Naive thymus-derived CD4-positive, alpha-beta T cell (primary cell): ENCODE measurements at regions of chr9 and their contacts with region 1.

Region 1: DNA sequence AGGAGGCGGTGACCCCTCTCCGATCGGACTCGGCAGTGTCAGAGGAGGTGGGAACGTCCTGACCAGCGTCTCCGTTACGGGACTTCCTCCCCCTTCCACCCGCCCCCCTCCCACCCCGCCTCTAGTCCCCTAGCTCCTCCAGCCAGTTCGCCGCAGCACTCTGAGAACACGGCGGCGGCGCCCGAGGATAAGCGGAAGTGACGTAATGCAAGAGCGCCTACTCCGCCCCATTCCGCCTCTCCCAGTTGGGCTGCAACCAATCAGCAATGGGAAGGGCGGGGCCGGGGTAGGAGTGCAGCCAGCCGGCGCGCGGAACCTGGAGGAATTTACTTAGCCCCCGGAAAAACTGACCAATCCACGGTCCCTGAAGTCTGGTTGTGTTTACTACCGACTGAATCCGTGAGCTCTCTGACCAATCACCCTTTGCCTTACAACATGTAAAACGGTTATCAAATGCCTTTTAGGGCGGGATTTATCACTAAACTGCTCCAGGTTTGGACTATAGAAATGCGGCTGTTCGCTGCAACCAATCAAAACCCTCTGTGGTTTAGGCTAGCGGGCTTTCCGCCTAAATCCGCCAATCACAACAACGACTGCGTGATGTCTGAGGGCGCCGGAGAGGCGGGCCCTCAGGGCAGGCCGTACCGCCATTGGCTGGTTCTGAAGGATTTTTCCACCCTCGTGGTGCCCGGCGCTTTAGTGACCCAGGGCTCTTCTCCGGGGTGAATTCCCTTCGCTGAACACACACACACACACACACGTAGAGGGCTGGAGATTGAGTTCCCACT is at the start of gene ZBTB5:
- DNase-seq: peak; percentile 93 to 99 (median 99)
- ATAC-seq: peak; percentile 87
- H3K4me3 ChIP-seq: peak within 1 kb of the TSS; percentile 76
- H3K4me3 Mint-ChIP-seq: peak within 1 kb of the TSS; percentile 87 to 99 (median 96)
- H3K27ac ChIP-seq: peak within 1 kb of the TSS; percentile 89
- H3K27ac Mint-ChIP-seq: peak within 1 kb of the TSS; percentile 88 to 98 (median 95)
- H3K4me1 ChIP-seq: peaks cover 12 to 24% of the 10 kb centered on the region in 2 donors
- H3K4me1 Mint-ChIP-seq: peaks cover 27 to 43% (median 35%) of the 10 kb centered on the region in 7 donors
- H3K27me3 ChIP-seq: no peaks in the 10 kb centered on the region
- H3K27me3 Mint-ChIP-seq: no peaks in the 10 kb centered on the region
- total RNA-seq, gene ZBTB5: 8.5 to 16.8 (median 14.8) TPM

Region 2: DNA sequence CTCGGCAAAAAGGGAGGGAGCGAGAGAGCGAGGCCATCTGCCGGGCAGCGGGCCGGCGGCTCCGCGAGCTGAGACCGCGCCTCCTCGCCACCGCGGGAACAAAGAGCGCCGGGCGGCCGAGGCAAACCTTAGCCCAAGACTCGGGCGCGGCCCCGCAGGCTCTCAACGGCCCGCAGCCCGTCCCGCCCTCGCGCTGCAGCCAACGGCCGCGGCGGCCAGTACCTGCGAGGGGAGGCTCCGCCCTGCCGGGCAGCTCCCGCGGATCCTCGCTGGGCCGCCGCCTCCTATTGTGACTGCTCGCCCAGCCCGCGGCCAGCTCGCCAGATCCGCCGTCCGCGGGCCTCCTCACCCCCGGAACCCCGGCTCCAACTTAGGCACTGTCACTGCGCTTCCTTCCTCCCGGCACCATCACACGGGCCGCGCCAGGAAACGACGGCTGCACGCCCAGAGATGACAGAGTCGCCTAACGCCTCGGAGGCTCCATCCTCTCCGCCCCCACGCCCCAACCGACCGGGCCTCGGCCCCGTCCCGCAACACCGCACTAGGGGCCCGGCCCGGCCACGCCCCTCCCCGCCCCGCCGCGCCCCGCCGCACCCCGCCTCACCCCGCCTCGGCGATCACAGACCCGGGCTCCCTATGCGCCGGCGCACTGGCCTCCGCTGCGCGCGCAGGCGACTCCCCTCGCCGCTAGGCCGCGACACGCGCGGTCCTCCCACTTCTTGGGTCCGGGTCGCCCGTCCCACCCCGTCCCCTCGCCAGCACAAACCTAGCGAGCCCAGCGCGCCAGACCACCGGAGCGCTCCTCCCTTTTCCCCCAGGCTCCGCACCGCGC is 1064.9 kb before region 1 on chr9:
- CTCF ChIA-PET with region 1: no interaction called
- POLR2A ChIA-PET with region 1: no interaction called
- intact Hi-C with region 1: loop called (anchors 1 to 2 kb)
- DNase-seq: peak; percentile 83 to 94 (median 91)
- ATAC-seq: peak; percentile 88
- H3K4me3 ChIP-seq: peak overlapping the region; percentile 77
- H3K4me3 Mint-ChIP-seq: peak overlapping the region; percentile 85 to 97 (median 92)
- H3K27ac ChIP-seq: peak overlapping the region; percentile 94
- H3K27ac Mint-ChIP-seq: peak overlapping the region; percentile 92 to 98 (median 95)
- H3K4me1 ChIP-seq: peaks cover 16 to 26% of the 10 kb centered on the region in 2 donors
- H3K4me1 Mint-ChIP-seq: peaks cover 32 to 60% (median 54%) of the 10 kb centered on the region in 7 donors
- H3K27me3 ChIP-seq: no peaks in the 10 kb centered on the region
- H3K27me3 Mint-ChIP-seq: peaks cover 0 to 2% (median 0%) of the 10 kb centered on the region in 5 donors

Region 3: DNA sequence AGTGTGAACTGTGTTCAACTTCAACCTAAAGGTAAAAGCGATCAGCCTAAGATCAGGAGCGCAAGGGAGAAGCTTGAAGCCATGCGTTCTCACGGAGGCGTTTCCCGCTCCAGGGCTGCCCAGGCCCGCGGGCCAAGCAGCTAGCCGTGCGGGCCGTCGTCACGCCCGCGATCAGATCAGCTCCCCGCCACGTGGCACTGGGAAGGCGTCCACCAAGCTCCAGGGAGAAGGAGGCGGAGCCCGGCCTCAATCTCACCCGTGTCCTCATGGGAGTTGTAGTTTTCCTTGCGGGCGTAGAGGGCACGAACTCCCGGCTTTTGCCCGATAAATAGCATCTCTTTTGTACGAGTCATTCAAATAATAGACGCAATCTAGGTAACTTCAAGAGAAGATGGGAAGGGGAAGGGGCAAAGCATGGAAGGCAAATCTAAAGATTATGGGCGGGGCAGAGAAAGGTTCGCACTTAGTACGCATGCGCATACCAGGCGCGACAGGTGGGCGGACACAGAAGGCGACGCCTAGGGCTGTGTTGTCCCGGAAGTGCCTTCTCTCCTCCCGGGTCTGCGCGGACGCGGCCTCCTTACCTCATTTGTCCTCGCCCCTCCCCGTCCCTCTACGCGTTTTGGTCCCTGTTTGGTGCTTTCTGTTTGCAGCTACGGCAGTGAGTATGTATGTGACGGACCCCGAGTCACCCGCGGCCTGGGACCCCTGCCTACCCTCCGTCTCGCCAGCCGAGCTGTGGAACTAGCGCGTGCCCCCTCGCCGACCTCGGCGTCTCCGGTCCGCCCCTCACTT is 385.9 kb before region 1 on chr9:
- CTCF ChIA-PET with region 1: no interaction called
- POLR2A ChIA-PET with region 1: no interaction called
- intact Hi-C with region 1: loop called (anchors 1 to 10 kb)
- DNase-seq: peak; percentile 72 to 96 (median 94)
- ATAC-seq: peak; percentile 98
- H3K4me3 ChIP-seq: peak overlapping the region; percentile 67
- H3K4me3 Mint-ChIP-seq: peak overlapping the region; percentile 89 to 98 (median 95)
- H3K27ac ChIP-seq: peak overlapping the region; percentile 99
- H3K27ac Mint-ChIP-seq: peak overlapping the region; percentile 76 to 99 (median 97)
- H3K4me1 ChIP-seq: peaks cover 14 to 15% of the 10 kb centered on the region in 2 donors
- H3K4me1 Mint-ChIP-seq: peaks cover 33 to 56% (median 41%) of the 10 kb centered on the region in 7 donors
- H3K27me3 ChIP-seq: no peaks in the 10 kb centered on the region
- H3K27me3 Mint-ChIP-seq: peaks cover 0 to 10% (median 3%) of the 10 kb centered on the region in 5 donors

Region 4: DNA sequence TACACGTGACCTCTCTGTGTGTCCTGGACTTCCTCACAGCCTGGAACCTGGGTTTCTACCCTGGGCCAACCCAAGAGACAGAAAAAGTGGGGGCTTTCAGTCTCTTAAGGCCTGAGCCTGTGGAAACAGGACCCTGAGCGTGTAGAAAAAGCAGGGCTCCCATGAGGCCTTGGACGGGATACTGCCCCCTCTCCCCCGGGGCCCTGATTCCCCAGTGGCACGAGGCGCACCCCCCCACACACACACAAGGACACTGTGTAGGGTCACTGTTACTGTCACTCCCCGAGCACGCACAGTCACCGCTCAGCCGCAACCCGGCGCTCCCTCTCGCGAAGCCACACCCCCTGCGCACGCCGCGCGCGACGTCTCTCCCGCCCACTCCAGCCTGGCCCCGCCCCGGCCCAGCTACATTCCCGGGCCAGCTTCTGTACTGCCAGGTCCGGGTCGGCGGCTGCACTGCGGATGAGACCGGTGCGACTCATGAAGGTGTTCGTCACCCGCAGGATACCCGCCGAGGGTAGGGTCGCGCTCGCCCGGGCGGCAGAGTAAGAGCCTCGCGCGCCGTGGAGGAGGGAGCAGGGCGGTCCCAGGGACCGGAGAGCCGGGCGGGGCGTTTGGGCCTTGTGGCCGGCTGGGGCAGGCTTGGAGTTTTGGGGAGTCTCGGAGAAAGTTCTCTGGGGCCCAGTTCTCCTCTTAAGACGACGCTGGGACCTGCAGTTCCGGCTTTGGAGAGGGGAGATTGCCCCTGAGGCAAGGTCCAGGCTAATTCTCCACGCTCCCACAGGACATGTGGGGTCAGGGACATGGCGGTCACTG is 42.9 kb before region 1 on chr9 and contains the start of gene GRHPR:
- CTCF ChIA-PET with region 1: no interaction called
- POLR2A ChIA-PET with region 1: interaction called, 15 read pairs
- intact Hi-C with region 1: loop called (anchors 1 kb)
- DNase-seq: peak; percentile 76 to 93 (median 84)
- ATAC-seq: peak; percentile 99
- H3K4me3 ChIP-seq: peak within 1 kb of the TSS; percentile 86
- H3K4me3 Mint-ChIP-seq: peak within 1 kb of the TSS; percentile 84 to 98 (median 96)
- H3K27ac ChIP-seq: peak within 1 kb of the TSS; percentile 89
- H3K27ac Mint-ChIP-seq: peak within 1 kb of the TSS; percentile 87 to 98 (median 95)
- H3K4me1 ChIP-seq: peaks cover 5 to 12% of the 10 kb centered on the region in 2 donors
- H3K4me1 Mint-ChIP-seq: peaks cover 19 to 31% (median 23%) of the 10 kb centered on the region in 7 donors
- H3K27me3 ChIP-seq: no peaks in the 10 kb centered on the region
- H3K27me3 Mint-ChIP-seq: no peaks in the 10 kb centered on the region
- total RNA-seq, gene GRHPR: 33.2 to 58.6 (median 53.1) TPM

Region 5: GRCh38 chr9:37550781-37551180 is 85.3 kb after region 1 on chr9:
- CTCF ChIA-PET with region 1: no interaction called
- POLR2A ChIA-PET with region 1: no interaction called
- intact Hi-C with region 1: no loop called
- DNase-seq: no peak
- ATAC-seq: no peak
- H3K4me3 ChIP-seq: no peak overlapping the region
- H3K4me3 Mint-ChIP-seq: no peak overlapping the region
- H3K27ac ChIP-seq: no peak overlapping the region
- H3K27ac Mint-ChIP-seq: peak overlapping the region in 1 of 9 donors; percentile 46
- H3K4me1 ChIP-seq: no peaks in the 10 kb centered on the region
- H3K4me1 Mint-ChIP-seq: no peaks in the 10 kb centered on the region
- H3K27me3 ChIP-seq: no peaks in the 10 kb centered on the region
- H3K27me3 Mint-ChIP-seq: no peaks in the 10 kb centered on the region

Region 6: GRCh38 chr9:37753489-37754190 is 288.2 kb after region 1 on chr9 and contains the start of gene TRMT10B:
- CTCF ChIA-PET with region 1: no interaction called
- POLR2A ChIA-PET with region 1: no interaction called
- intact Hi-C with region 1: loop called in 1 of 2 experiments (anchors 1 kb)
- DNase-seq: peak; percentile 50 to 78 (median 70)
- ATAC-seq: peak; percentile 95
- H3K4me3 ChIP-seq: peak within 1 kb of the TSS; percentile 92
- H3K4me3 Mint-ChIP-seq: peak within 1 kb of the TSS; percentile 87 to 98 (median 96)
- H3K27ac ChIP-seq: peak within 1 kb of the TSS; percentile 87
- H3K27ac Mint-ChIP-seq: peak within 1 kb of the TSS; percentile 68 to 95 (median 92)
- H3K4me1 ChIP-seq: peaks cover 9 to 11% of the 10 kb centered on the region in 2 donors
- H3K4me1 Mint-ChIP-seq: peaks cover 26 to 52% (median 33%) of the 10 kb centered on the region in 7 donors
- H3K27me3 ChIP-seq: no peaks in the 10 kb centered on the region
- H3K27me3 Mint-ChIP-seq: no peaks in the 10 kb centered on the region
- total RNA-seq, gene TRMT10B: 16.0 to 28.9 (median 18.5) TPM

Region 7: DNA sequence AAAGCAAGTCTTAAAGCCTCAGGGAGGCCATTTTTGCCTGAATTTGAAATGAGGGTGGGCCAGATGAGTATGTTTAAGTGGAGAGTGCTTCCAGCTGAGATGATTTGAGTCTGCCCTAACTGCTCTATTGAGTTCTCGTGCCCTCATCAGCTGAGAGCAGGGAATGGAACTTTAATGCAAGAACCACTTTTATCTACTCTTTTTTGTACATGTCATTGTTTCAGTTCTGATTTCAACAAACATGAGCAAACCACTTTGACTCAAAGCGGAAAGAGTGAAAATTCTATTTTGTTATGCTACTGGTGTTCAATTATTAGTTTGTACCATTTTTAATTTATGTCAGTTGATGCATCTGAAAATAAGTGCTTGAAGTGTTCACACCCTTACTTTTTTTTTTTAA is 370.9 kb after region 1 on chr9:
- CTCF ChIA-PET with region 1: no interaction called
- POLR2A ChIA-PET with region 1: no interaction called
- intact Hi-C with region 1: no loop called
- DNase-seq: no peak
- ATAC-seq: no peak
- H3K4me3 ChIP-seq: no peak overlapping the region
- H3K4me3 Mint-ChIP-seq: no peak overlapping the region
- H3K27ac ChIP-seq: no peak overlapping the region
- H3K27ac Mint-ChIP-seq: peak overlapping the region in 1 of 9 donors; percentile 68
- H3K4me1 ChIP-seq: no peaks in the 10 kb centered on the region
- H3K4me1 Mint-ChIP-seq: peaks cover 0 to 9% (median 4%) of the 10 kb centered on the region in 7 donors
- H3K27me3 ChIP-seq: no peaks in the 10 kb centered on the region
- H3K27me3 Mint-ChIP-seq: no peaks in the 10 kb centered on the region

Region 8: DNA sequence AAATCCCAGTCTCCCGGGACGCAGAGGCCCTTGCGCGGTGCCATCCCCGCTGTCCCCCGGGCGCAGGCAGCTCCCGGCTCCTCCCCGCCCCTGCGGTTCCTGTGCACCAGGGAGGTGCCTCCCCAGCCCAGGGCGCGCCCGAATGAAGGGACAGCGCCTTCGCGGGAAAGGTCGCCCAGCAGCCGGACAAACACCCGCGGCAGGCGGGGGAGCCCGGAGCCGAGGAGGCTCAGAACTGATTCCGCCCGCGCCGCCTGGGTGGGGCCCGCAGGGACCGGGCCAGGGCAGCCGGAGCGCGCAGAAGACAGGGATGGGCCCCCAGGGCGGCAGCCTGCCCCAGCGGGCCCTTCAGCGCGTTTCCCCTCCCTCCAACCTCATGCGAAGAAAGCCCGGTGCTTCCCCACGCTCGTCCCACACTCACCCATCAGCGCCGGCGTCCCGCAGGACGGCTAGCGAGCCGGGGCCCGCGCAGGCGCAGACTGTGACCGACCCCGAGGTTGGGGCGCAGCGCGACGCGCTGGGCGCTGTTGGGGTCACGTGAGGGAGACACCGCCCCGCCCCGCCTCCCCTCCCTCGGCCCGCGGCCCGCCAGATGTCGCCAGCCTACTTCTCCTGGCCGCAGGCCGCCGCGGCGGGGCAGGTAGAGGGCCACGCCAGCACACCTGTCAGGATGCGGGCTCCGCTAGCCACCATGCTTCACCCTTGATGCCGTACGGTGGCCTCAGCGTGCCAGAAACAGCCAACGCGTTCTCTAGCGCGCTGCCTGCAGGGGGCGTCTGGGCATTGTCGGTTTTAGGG is 438.4 kb after region 1 on chr9 and contains the start of gene SLC25A51:
- CTCF ChIA-PET with region 1: no interaction called
- POLR2A ChIA-PET with region 1: no interaction called
- intact Hi-C with region 1: loop called in 1 of 2 experiments (anchors 1 kb)
- DNase-seq: peak; percentile 89 to 99 (median 95)
- ATAC-seq: peak; percentile 93
- H3K4me3 ChIP-seq: peak within 1 kb of the TSS; percentile 69
- H3K4me3 Mint-ChIP-seq: peak within 1 kb of the TSS; percentile 88 to 96 (median 90)
- H3K27ac ChIP-seq: peak within 1 kb of the TSS; percentile 71
- H3K27ac Mint-ChIP-seq: peak within 1 kb of the TSS; percentile 90 to 97 (median 94)
- H3K4me1 ChIP-seq: peaks cover 20 to 22% of the 10 kb centered on the region in 2 donors
- H3K4me1 Mint-ChIP-seq: peaks cover 16 to 41% (median 30%) of the 10 kb centered on the region in 7 donors
- H3K27me3 ChIP-seq: no peaks in the 10 kb centered on the region
- H3K27me3 Mint-ChIP-seq: peaks cover 0 to 4% (median 0%) of the 10 kb centered on the region in 5 donors
- total RNA-seq, gene SLC25A51: 20.2 to 37.8 (median 30.2) TPM